ENCODE measurements at regions of chr1 and their contacts with region 1.

Region 1: GRCh38 chr1:39016604-39017171 is 9.5 kb upstream of the NDUFS5 start:
- DNase-seq: no peak
- H3K4me3 ChIP-seq: no peak overlapping the region
- H3K27ac ChIP-seq: no peak overlapping the region
- H3K4me1 ChIP-seq: no peaks in the 10 kb centered on the region
- H3K27me3 ChIP-seq: no peaks in the 10 kb centered on the region
- CTCF ChIP-seq: no peak
- POLR2A ChIP-seq: no peak

Region 2: GRCh38 chr1:38964140-38964548 is 52.5 kb before region 1 on chr1:
- intact Hi-C with region 1: loop called (anchors 2 kb)
- DNase-seq: no peak
- H3K4me3 ChIP-seq: no peak overlapping the region
- H3K27ac ChIP-seq: no peak overlapping the region
- H3K4me1 ChIP-seq: no peaks in the 10 kb centered on the region
- H3K27me3 ChIP-seq: no peaks in the 10 kb centered on the region
- CTCF ChIP-seq: no peak
- POLR2A ChIP-seq: no peak

Region 3: GRCh38 chr1:38989979-38990378 is 26.7 kb before region 1 on chr1:
- intact Hi-C with region 1: no loop called
- DNase-seq: no peak
- H3K4me3 ChIP-seq: no peak overlapping the region
- H3K27ac ChIP-seq: peak overlapping the region; percentile 95
- H3K4me1 ChIP-seq: no peaks in the 10 kb centered on the region
- H3K27me3 ChIP-seq: no peaks in the 10 kb centered on the region
- CTCF ChIP-seq: no peak
- POLR2A ChIP-seq: no peak